T-cell (primary cell): ENCODE measurements at regions of chr6 and their contacts with region 1.

Region 1: DNA sequence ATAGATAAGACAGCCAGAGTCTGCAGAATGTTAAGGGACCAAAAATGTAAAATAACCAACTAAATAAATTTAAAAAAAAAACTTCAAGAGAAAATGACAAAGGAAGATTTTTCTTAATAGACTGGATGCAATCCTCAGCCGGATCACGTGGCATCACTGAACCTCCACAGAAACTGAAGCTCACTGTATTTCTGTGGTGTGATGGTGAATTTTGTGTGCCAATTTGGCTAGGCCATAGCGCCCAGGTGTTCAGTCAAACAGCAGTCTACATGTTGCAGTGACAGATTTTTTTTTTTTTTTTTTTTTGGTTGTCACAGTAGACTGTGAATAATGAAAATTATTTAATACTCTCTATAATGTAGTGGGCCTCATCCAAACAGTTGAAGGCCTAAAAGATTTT is 95.5 kb downstream of the ARHGAP18 start:
- DNase-seq: no peak
- ATAC-seq: no peak
- H3K4me3 ChIP-seq: no peak overlapping the region
- H3K4me3 Mint-ChIP-seq: no peak overlapping the region
- H3K27ac ChIP-seq: no peak overlapping the region
- H3K27ac Mint-ChIP-seq: no peak overlapping the region
- H3K4me1 ChIP-seq: no peaks in the 10 kb centered on the region
- H3K4me1 Mint-ChIP-seq: peaks cover 0 to 5% (median 0%) of the 10 kb centered on the region in 3 donors
- H3K27me3 ChIP-seq: no peaks in the 10 kb centered on the region
- H3K27me3 Mint-ChIP-seq: no peaks in the 10 kb centered on the region

Region 2: GRCh38 chr6:129653746-129654145 is 39.3 kb after region 1 on chr6:
- CTCF ChIA-PET with region 1: no interaction called
- POLR2A ChIA-PET with region 1: interaction called in 1 of 2 experiments, 12 read pairs
- DNase-seq: no peak
- ATAC-seq: no peak
- H3K4me3 ChIP-seq: no peak overlapping the region
- H3K4me3 Mint-ChIP-seq: no peak overlapping the region
- H3K27ac ChIP-seq: no peak overlapping the region
- H3K27ac Mint-ChIP-seq: no peak overlapping the region
- H3K4me1 ChIP-seq: no peaks in the 10 kb centered on the region
- H3K4me1 Mint-ChIP-seq: peaks cover 7 to 13% (median 7%) of the 10 kb centered on the region in 3 donors
- H3K27me3 ChIP-seq: no peaks in the 10 kb centered on the region
- H3K27me3 Mint-ChIP-seq: no peaks in the 10 kb centered on the region

Region 3: DNA sequence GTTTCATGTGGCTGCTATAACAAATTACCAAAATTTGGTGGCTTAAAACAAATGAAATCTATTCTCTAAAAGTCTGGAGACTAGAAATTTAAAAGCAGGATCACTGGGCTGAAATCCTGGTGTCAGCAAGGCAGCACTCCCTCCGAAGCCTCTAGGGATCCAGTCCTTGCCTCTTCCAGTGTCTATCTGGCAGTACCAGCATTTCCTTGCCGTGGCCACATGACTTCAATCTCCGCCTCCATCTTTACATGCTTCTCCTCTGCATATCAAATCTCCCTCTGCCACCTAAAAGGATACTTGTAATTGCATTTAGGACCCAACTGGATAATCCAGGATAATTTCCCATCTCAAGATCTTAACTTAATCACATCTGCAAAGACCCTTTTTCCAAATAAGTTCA is 65.3 kb after region 1 on chr6:
- CTCF ChIA-PET with region 1: no interaction called
- POLR2A ChIA-PET with region 1: no interaction called
- DNase-seq: no peak
- ATAC-seq: no peak
- H3K4me3 ChIP-seq: no peak overlapping the region
- H3K4me3 Mint-ChIP-seq: no peak overlapping the region
- H3K27ac ChIP-seq: no peak overlapping the region
- H3K27ac Mint-ChIP-seq: no peak overlapping the region
- H3K4me1 ChIP-seq: peaks cover 10 to 12% of the 10 kb centered on the region in 2 experiments
- H3K4me1 Mint-ChIP-seq: peaks cover 15 to 39% (median 32%) of the 10 kb centered on the region in 3 donors
- H3K27me3 ChIP-seq: no peaks in the 10 kb centered on the region
- H3K27me3 Mint-ChIP-seq: no peaks in the 10 kb centered on the region

Region 4: GRCh38 chr6:129828229-129828628 is 213.8 kb after region 1 on chr6:
- CTCF ChIA-PET with region 1: no interaction called
- POLR2A ChIA-PET with region 1: no interaction called
- DNase-seq: no peak
- ATAC-seq: no peak
- H3K4me3 ChIP-seq: no peak overlapping the region
- H3K4me3 Mint-ChIP-seq: no peak overlapping the region
- H3K27ac ChIP-seq: no peak overlapping the region
- H3K27ac Mint-ChIP-seq: no peak overlapping the region
- H3K4me1 ChIP-seq: no peaks in the 10 kb centered on the region
- H3K4me1 Mint-ChIP-seq: peaks cover 0 to 2% (median 0%) of the 10 kb centered on the region in 3 donors
- H3K27me3 ChIP-seq: no peaks in the 10 kb centered on the region
- H3K27me3 Mint-ChIP-seq: peaks cover 0 to 4% of the 10 kb centered on the region in 2 donors